ENCODE measurements at regions of chr13 and their contacts with region 1.

Region 1: DNA sequence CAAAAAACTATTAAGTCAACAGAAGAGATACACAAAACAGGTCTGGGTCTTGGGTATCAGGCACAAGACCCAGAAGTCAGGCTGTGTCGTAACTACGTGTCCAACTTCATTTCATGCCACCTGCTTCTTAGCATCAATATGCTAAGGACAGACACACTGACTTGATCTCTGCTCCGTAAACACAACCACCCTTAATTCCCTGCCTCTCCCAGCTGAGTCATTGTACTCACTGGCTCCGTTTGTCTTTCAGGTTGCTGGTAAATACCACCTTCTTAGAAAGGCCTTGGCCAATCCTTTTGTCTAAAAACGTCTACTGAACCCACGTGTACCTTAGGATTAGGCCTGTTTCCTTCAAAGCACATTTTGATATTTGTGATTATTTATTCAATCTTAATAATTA is 726.2 kb downstream of the PCDH9 start:
- DNase-seq: no peak
- ATAC-seq: no peak
- H3K4me3 ChIP-seq: no peak overlapping the region
- H3K4me3 Mint-ChIP-seq: no peak overlapping the region
- H3K27ac ChIP-seq: no peak overlapping the region
- H3K27ac Mint-ChIP-seq: no peak overlapping the region
- H3K4me1 ChIP-seq: no peaks in the 10 kb centered on the region
- H3K4me1 Mint-ChIP-seq: no peaks in the 10 kb centered on the region
- H3K27me3 ChIP-seq: no peaks in the 10 kb centered on the region
- H3K27me3 Mint-ChIP-seq: no peaks in the 10 kb centered on the region
- CTCF ChIP-seq: no peak

Region 2: DNA sequence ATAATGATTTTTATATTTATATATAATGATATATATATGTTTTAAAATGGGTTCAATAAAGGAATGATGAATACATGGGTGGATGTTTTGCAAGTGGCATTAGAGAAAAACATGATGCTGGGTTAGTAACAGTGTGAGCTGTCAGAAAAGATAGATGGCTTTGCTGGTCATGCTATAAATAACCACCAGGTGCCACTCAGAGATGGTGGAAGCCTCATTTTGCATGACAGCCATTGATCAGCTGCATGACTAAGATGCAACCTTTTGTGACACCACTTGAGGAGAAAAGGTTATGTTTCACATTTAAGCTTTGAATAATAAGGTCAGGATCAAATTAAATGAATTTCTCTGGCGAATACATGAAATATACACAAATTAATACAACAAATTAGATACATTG is 11.4 kb before region 1 on chr13:
- CTCF ChIA-PET with region 1: no interaction called
- POLR2A ChIA-PET with region 1: no interaction called
- intact Hi-C with region 1: loop called in 1 of 2 experiments (anchors 1 kb)
- DNase-seq: no peak
- ATAC-seq: no peak
- H3K4me3 ChIP-seq: no peak overlapping the region
- H3K4me3 Mint-ChIP-seq: no peak overlapping the region
- H3K27ac ChIP-seq: no peak overlapping the region
- H3K27ac Mint-ChIP-seq: no peak overlapping the region
- H3K4me1 ChIP-seq: no peaks in the 10 kb centered on the region
- H3K4me1 Mint-ChIP-seq: no peaks in the 10 kb centered on the region
- H3K27me3 ChIP-seq: no peaks in the 10 kb centered on the region
- H3K27me3 Mint-ChIP-seq: no peaks in the 10 kb centered on the region
- CTCF ChIP-seq: no peak

Region 3: GRCh38 chr13:66635526-66635925 is 131.6 kb after region 1 on chr13:
- CTCF ChIA-PET with region 1: no interaction called
- POLR2A ChIA-PET with region 1: no interaction called
- intact Hi-C with region 1: no loop called
- DNase-seq: no peak
- ATAC-seq: no peak
- H3K4me3 ChIP-seq: no peak overlapping the region
- H3K4me3 Mint-ChIP-seq: no peak overlapping the region
- H3K27ac ChIP-seq: no peak overlapping the region
- H3K27ac Mint-ChIP-seq: no peak overlapping the region
- H3K4me1 ChIP-seq: no peaks in the 10 kb centered on the region
- H3K4me1 Mint-ChIP-seq: no peaks in the 10 kb centered on the region
- H3K27me3 ChIP-seq: no peaks in the 10 kb centered on the region
- H3K27me3 Mint-ChIP-seq: no peaks in the 10 kb centered on the region
- CTCF ChIP-seq: no peak

Measured in CD8-positive, alpha-beta T cell (primary cell).